Heart right ventricle (tissue), 16 donors: ENCODE measurements at regions of chr9 and their contacts with region 1.

Region 1: DNA sequence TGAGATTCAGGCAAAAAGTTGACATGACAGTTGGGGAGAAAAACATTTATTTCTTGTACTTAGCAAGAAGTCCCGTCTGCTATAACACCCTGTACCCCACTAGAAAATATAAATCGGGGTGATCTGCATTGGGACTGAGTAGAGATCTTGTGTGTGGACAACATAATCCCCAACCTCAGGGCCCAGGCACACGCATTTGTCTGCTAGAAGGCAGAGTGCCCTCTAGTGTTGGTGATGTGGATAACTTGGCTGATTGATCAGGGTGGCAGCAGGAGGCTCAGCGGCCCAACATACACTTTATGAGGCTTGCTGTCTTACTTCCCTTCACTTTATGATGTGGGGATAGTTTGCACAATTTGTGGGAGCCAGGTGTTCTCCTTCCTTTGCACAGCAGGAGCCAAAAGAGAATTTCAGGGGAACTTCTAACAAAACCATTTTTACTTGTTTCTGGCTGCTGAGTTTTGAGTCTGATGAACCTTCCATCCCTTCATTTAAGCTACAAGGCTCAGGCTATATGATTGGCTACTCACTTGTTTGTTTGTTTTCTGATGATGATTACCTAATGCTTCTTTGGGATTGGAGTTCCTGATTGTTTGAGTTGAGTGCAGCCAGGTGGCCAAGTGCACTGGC is 263.2 kb downstream of the DMAC1 start:
- DNase-seq: peak; percentile 16 to 46
- ATAC-seq: peak in 6 of 8 donors; percentile 34 to 76 (median 68)
- H3K4me3 ChIP-seq: no peak overlapping the region
- H3K27ac ChIP-seq: no peak overlapping the region
- H3K4me1 ChIP-seq: peaks cover 0 to 9% (median 0%) of the 10 kb centered on the region in 9 donors
- H3K27me3 ChIP-seq: no peaks in the 10 kb centered on the region
- CTCF ChIP-seq: peak; percentile 47 to 74 (median 70)

Region 2: DNA sequence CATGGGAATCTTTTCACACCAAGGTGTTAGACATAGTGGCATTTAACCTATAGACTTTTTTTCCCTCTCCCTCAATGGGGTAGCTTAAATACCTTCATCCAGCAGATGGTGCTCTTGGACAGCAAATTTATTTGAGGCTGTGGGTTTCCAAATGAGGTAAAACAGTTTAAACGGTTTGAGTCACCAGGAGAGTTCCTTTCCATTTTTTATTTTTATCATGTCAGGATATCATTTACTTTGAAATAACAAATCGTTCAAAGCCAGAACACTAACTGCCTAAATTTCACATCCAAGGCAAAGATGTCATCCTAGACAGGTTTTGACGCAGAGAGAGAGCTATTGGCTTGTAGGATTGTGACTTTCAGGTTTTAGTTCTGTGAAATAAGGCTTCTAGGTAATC is 709.0 kb before region 1 on chr9:
- intact Hi-C with region 1: loop called in 2 of 10 experiments (anchors 5 to 10 kb)
- DNase-seq: no peak
- ATAC-seq: peak in 1 of 8 donors; percentile 31
- H3K4me3 ChIP-seq: no peak overlapping the region
- H3K27ac ChIP-seq: no peak overlapping the region
- H3K4me1 ChIP-seq: peaks cover 0 to 4% (median 0%) of the 10 kb centered on the region in 9 donors
- H3K27me3 ChIP-seq: no peaks in the 10 kb centered on the region
- CTCF ChIP-seq: peak in 8 of 9 donors; percentile 29 to 65 (median 55)

Region 3: GRCh38 chr9:7055201-7055903 is 481.1 kb before region 1 on chr9:
- intact Hi-C with region 1: loop called in 6 of 10 experiments (anchors 5 to 10 kb)
- DNase-seq: no peak
- ATAC-seq: no peak
- H3K4me3 ChIP-seq: no peak overlapping the region
- H3K27ac ChIP-seq: no peak overlapping the region
- H3K4me1 ChIP-seq: peaks cover 0 to 9% (median 0%) of the 10 kb centered on the region in 9 donors
- H3K27me3 ChIP-seq: no peaks in the 10 kb centered on the region
- CTCF ChIP-seq: no peak

Region 4: GRCh38 chr9:7273391-7273974 is 262.9 kb before region 1 on chr9:
- intact Hi-C with region 1: loop called in 6 of 10 experiments (anchors 2 to 10 kb)
- DNase-seq: peak in 1 of 2 donors; percentile 19
- ATAC-seq: peak in 6 of 8 donors; percentile 50 to 78 (median 59)
- H3K4me3 ChIP-seq: no peak overlapping the region
- H3K27ac ChIP-seq: no peak overlapping the region
- H3K4me1 ChIP-seq: no peaks in the 10 kb centered on the region
- H3K27me3 ChIP-seq: no peaks in the 10 kb centered on the region
- CTCF ChIP-seq: peak in 8 of 9 donors; percentile 24 to 75 (median 62)

Region 5: DNA sequence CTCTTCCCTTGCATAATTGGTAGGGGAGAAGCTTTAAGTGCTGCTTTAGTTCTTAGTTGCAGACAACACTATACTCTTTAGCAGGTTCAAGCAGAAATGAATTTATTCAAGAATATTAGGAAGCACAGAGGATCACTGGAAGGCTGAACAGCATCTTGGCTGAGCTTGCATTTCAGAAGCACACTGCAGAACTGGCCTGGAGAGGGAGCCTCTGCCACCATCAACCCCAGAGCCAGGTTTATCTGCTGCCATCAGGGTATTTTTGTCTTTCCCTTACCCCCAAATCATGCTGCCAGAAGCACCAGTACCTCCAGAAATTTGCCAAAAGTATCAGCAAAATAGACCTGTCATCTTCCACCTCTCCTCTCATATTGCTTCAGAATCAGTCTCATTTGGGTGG is 177.5 kb before region 1 on chr9:
- intact Hi-C with region 1: loop called in 1 of 10 experiments (anchors 10 kb)
- DNase-seq: no peak
- ATAC-seq: no peak
- H3K4me3 ChIP-seq: no peak overlapping the region
- H3K27ac ChIP-seq: no peak overlapping the region
- H3K4me1 ChIP-seq: peaks cover 0 to under 1% (median 0%) of the 10 kb centered on the region in 9 donors
- H3K27me3 ChIP-seq: no peaks in the 10 kb centered on the region
- CTCF ChIP-seq: no peak

Region 6: DNA sequence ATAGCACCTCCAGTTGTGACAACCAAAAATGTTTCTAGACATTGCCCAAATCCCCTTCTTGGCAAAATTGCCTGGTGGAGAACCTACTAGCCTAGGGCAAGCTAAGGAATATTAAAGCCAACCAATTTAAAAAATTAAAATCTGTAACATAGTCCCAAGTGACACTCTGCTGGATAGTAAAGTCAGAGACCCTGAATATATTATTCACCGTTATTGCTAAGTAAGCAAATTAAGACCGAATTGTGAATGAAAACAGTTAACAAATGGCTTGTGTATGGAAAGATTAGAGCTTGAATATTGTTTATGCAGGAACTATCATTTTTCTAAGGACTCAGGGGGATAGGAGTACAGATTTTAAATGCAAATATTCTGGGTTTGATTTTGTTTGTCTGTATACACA is 55.1 kb after region 1 on chr9:
- intact Hi-C with region 1: no loop called
- DNase-seq: no peak
- ATAC-seq: no peak
- H3K4me3 ChIP-seq: no peak overlapping the region
- H3K27ac ChIP-seq: no peak overlapping the region
- H3K4me1 ChIP-seq: no peaks in the 10 kb centered on the region
- H3K27me3 ChIP-seq: no peaks in the 10 kb centered on the region
- CTCF ChIP-seq: no peak